Head of caudate nucleus (tissue), 42 donors: ENCODE measurements at regions of chr19 and their contacts with region 1.

Region 1: DNA sequence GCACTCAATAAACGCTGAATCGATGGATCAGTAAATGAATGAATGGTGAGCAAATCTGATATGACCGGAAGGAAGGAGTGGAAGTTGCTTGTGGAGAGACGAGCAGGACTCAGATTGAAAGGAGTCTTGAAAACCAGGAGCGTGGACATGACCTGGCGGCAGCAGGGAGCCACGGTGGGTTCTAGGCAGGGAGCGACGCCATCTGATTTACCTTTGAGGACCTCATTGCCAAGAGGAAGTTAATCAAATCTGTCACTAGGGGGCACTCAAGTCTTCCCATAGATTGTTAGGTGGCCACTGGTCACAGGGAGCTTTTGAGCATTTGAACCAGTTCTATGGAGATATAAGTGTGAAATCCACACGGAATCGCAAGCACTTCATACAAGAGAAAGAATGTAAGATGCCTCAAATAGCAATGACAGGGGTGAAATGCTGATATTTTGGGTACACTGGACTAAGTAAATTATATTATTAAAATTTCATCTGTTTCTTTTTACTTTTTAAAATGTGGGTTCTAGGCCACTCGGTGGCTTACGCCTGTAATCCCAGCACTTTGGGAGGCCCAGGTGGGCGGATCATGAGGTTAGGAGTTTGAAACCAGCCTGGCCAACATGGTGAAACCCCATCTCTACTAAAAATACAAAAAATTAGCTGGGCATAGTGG is 9.2 kb upstream of the FBN3 start:
- DNase-seq: peak in 36 of 42 donors; percentile 12 to 86 (median 58)

Region 2: DNA sequence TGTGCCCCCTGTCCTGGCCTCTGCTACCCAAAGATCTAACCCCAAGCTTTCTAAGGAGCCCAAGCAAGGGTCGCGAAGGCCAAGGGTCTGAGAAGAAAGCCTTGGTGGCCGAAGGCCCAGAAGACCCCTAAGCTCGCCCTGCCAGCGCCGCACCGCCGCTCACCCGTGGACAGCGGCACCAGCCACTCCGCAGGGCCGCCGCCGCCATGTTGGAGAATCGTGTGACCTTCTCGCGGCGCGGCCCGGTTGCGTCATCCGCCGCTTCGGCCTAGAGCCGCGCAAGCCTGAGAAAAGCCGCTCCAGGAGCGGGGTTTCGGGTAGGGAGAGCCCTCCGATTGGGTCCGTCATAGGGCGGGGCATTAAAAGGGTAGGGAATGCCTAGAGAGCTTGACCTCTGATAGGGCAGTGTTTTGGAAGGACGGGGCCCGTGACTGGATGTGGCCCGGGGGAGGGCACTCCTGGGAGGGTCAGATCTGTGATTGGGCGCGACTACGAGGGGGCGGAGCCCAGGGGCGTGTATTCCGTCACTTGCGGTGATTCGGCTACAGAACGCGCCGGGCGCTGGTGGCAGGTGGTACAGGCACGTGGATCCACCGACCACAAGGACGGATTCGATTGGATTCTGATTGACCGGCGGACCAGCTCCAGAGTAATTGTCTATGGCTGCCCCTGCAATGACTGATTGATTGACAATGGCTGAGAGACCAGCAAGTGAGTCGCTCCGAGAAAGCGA is 214.9 kb before region 1 on chr19 and contains the start of gene TIMM44:
- intact Hi-C with region 1: loop called (anchors 10 kb)
- DNase-seq: peak; percentile 98 to 100 (median 100)

Region 3: GRCh38 chr19:8005534-8006256 is 152.8 kb before region 1 on chr19 and contains the start of gene ELAVL1:
- intact Hi-C with region 1: no loop called
- DNase-seq: peak; percentile 55 to 96 (median 89)

Region 4: DNA sequence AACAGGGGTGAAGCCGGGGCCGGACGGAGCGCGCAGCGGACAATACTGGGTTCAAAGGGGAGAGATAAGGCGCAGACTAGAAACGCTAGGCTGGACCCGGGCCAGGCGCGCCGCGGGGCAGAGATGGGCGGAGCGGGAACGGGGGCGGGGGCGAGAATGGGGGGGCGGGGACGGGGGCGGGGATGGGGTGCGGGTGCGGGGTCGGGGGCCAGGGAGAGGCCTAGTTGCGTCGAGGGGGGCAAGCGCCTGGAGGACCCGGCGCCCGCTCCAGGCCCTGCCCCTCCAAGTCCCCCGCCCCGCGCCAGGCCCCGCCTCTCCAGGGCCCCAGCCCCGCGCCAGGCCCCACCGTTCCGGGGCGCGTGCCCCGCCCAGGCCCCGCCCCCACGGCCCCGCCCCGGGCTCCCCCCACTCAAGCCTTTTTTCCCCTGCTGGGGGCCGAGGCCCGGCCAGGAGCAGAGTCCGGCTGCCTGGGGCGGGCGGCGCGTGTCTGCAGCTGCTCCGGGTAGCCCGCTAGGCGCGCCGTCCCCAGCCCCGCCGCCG is 50.4 kb after region 1 on chr19 and contains the start of gene CERS4:
- intact Hi-C with region 1: loop called (anchors 10 kb)
- DNase-seq: peak; percentile 63 to 96 (median 90)

Region 5: GRCh38 chr19:8252922-8253589 is 94.5 kb after region 1 on chr19:
- intact Hi-C with region 1: loop called (anchors 2 kb)
- DNase-seq: peak; percentile 67 to 94 (median 87)